ENCODE measurements at regions of chr11 and their contacts with region 1.

Region 1: DNA sequence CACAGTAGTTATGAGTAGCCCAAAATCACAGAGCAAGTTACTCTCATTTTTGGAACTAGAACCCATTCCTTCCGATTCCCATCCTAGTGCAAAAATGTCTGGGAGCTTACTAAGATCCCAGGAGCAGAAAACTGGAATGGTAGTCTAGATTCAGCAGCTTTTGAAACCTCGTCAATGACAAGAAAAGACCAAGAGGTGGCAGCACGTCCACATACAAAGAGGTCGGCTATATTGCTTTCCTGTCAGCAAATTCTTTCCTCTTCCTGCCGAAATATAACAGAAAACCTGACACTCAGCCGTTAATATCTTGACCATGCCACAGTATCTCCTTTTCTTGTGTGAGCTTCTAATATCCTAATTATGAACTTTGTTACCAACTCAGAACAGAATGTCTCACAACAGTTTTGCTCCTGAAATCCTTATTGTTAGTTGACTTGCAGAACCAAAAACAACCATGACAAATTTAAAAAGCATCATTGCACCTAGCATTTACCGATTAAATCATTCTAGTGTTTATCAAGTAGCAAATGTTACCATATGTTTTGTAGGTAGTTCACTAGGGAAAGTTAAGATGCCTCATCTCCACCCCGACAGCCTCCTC is 92.8 kb upstream of the OR9G4 start:
- DNase-seq: peak; percentile 57
- H3K4me3 ChIP-seq: no peak overlapping the region
- H3K27ac ChIP-seq: no peak overlapping the region
- H3K4me1 ChIP-seq: peaks cover 16% of the 10 kb centered on the region
- H3K27me3 ChIP-seq: no peaks in the 10 kb centered on the region
- CTCF ChIP-seq: peak; percentile 72 to 75

Region 2: GRCh38 chr11:56906683-56907148 is 65.4 kb after region 1 on chr11:
- CTCF ChIA-PET with region 1: no interaction called
- dilution Hi-C with region 1: loop called (anchors 10 kb)
- in situ Hi-C with region 1: no loop called
- intact Hi-C with region 1: no loop called
- DNase-seq: peak; percentile 91
- H3K4me3 ChIP-seq: no peak overlapping the region
- H3K27ac ChIP-seq: peak overlapping the region; percentile 100
- H3K4me1 ChIP-seq: peaks cover 50% of the 10 kb centered on the region
- H3K27me3 ChIP-seq: no peaks in the 10 kb centered on the region
- CTCF ChIP-seq: no peak

Region 3: DNA sequence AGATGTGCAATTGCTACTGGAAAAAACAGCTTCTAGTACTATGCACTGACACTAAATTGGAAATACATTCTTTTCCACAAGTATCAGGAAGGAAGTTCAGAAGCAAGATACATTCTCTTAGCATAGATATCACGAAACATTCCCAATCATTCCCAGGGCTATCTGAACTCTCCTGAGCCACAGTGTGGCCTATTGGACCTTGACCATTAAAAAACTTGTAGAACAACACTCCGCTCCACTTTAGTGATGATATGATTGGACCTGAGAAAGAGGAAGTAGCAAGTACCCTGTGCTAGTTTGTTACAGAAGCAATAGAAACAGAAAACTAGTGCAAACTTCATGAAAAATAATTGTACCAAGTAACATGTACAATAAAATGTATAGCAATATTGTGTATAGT is 136.0 kb after region 1 on chr11:
- CTCF ChIA-PET with region 1: no interaction called
- dilution Hi-C with region 1: no loop called
- in situ Hi-C with region 1: no loop called
- intact Hi-C with region 1: loop called (anchors 5 kb)
- DNase-seq: no peak
- H3K4me3 ChIP-seq: no peak overlapping the region
- H3K27ac ChIP-seq: no peak overlapping the region
- H3K4me1 ChIP-seq: peaks cover 4% of the 10 kb centered on the region
- H3K27me3 ChIP-seq: no peaks in the 10 kb centered on the region
- CTCF ChIP-seq: no peak

Region 4: DNA sequence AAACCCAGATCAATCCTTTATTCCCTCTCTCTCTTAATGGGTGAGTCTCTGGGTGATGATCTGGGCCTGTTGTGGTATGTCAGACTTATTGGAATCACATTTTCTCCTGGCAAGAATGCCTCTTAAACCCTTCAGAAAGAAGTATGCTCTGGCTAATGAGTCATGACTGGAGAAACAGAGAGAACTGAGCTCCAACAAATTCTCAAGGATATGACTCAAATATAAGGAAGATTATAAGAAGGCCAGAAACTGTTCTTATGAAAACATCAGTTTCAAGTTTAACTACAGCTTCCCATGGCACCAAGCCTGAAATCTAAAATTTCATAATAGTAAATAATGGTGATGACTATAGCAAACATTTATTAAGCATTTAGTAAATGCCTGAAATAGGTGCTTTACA is 231.3 kb after region 1 on chr11:
- CTCF ChIA-PET with region 1: no interaction called
- dilution Hi-C with region 1: no loop called
- in situ Hi-C with region 1: no loop called
- intact Hi-C with region 1: loop called (anchors 5 kb)
- DNase-seq: peak; percentile 97
- H3K4me3 ChIP-seq: no peak overlapping the region
- H3K27ac ChIP-seq: peak overlapping the region; percentile 59
- H3K4me1 ChIP-seq: peaks cover 23% of the 10 kb centered on the region
- H3K27me3 ChIP-seq: no peaks in the 10 kb centered on the region
- CTCF ChIP-seq: no peak

Region 5: DNA sequence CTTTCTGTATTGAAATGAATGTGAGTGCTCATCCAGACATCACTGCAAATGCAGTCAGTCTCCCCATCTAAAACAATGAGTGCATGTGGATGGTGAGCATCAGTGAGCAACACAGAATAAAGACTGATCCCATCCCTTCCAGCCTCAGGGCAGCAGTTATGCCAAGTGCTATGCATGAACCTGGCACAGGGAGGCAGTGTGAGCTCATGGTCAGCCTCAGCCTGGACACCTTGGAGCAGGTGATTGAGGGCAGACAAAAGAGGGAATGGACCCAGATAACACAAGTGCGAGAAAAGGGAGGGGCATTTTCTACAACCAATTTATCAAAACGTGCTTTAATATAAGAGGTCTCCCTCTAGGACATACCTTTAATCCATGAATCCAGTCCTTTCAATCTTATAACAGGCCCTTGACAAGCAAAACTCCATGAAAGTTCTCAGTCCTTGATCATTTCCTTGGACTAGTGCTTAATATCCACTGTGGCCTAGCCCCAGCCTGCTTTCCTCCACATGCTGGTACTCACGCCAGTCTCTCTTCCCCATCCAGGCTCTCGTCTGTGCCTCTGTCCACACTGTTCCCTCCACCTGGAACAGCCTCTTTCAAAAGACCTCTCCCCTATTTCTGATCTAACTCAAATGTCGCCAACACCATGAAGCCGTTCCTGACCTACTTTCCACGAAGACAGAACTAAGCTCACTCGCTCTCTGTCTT is 289.9 kb after region 1 on chr11:
- CTCF ChIA-PET with region 1: interaction called, 6 read pairs
- dilution Hi-C with region 1: no loop called
- in situ Hi-C with region 1: loop called in 1 of 2 experiments (anchors 25 kb)
- intact Hi-C with region 1: loop called (anchors 1 kb)
- DNase-seq: peak; percentile 39
- H3K4me3 ChIP-seq: no peak overlapping the region
- H3K27ac ChIP-seq: no peak overlapping the region
- H3K4me1 ChIP-seq: no peaks in the 10 kb centered on the region
- H3K27me3 ChIP-seq: no peaks in the 10 kb centered on the region
- CTCF ChIP-seq: peak; percentile 78 to 93

Region 6: DNA sequence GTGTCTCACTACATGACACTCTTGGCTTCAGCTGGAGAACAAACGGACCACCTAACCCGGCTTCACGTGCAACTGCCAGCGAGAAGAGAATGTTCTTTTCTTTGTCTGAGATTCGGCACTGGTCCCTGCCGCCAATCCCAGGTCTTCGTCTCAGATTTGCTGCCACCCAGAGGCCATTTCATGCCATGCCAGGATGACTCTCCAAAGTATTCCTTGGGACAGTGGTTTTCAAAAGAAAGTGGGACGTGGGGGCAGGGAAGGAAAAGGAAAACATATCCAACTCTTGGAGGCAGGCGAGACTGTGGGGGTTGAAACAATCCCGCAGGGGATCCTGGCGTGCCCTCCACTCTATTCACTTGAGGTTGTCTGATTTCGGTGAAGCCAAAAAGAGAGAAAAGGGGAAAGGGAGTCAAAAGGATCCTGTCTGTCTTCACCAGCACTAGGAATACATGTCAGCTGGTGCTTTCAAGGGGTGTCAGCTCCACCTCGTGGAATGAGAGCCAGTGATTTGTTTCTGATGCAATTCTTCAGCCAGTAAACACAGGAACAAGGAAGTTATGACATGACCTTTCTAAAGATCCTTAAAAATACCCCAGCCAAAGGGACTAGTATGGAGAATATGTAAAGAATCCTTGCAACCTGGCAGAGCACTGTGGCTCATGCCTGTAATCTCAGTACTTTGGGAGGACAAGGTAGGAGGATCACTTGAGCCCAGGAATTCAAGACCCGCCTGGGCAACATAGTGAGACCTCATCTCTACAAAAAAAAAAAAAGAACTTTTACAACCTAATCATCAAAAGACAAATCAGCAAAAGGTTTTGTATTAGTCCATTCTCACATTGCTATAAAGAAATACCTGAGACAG is 436.8 kb after region 1 on chr11:
- CTCF ChIA-PET with region 1: interaction called, 3 read pairs
- dilution Hi-C with region 1: loop called (anchors 10 kb)
- in situ Hi-C with region 1: no loop called
- intact Hi-C with region 1: loop called (anchors 1 kb)
- DNase-seq: peak; percentile 64
- H3K4me3 ChIP-seq: no peak overlapping the region
- H3K27ac ChIP-seq: peak overlapping the region; percentile 62
- H3K4me1 ChIP-seq: peaks cover 36% of the 10 kb centered on the region
- H3K27me3 ChIP-seq: no peaks in the 10 kb centered on the region
- CTCF ChIP-seq: peak; percentile 82 to 93

Region 7: DNA sequence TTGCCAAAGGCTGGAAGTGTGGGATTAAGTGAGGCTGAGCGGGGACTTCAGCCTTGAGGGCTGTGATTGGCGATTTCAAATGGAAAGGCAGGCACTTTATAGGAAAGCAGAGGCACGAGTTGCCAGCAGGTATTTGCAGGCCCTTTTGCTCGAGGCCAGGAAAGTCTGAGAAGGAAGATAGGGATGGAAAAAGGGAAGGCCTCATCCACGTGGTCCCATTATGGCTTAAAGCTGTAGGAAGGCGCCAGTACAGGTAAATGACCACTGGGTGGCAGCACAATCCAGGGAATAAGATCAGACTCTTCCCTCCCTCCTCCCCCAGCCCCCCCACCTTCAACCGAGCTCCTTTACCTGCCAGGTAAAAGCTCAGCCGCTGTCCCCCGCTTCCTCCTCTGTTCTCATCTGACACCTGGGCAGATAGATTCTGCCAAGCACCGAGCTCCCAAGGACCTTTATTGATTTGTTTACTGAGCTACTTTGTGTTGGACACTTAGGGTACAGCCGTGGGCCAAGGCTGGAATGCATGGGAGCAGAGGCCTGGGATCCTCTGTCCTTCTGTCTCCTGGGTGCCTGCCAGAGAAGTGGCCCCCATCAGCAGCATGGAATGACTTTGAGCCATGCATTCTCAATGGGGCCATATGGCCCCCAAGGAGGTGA is 504.4 kb after region 1 on chr11:
- CTCF ChIA-PET with region 1: no interaction called
- dilution Hi-C with region 1: no loop called
- in situ Hi-C with region 1: no loop called
- intact Hi-C with region 1: loop called (anchors 5 kb)
- DNase-seq: peak; percentile 60
- H3K4me3 ChIP-seq: no peak overlapping the region
- H3K27ac ChIP-seq: no peak overlapping the region
- H3K4me1 ChIP-seq: no peaks in the 10 kb centered on the region
- H3K27me3 ChIP-seq: no peaks in the 10 kb centered on the region
- CTCF ChIP-seq: peak; percentile 57 to 69

Measured in mammary epithelial cell (primary cell).